CD4-positive, alpha-beta T cell (primary cell): ENCODE measurements at regions of chr3 and their contacts with region 1.

Region 1: GRCh38 chr3:143763564-143764162 is 84.6 kb downstream of the SLC9A9 start:
- DNase-seq: peak in 3 of 14 experiments; percentile 21 to 42 (median 27)
- ATAC-seq: no peak
- H3K4me3 ChIP-seq: no peak overlapping the region
- H3K4me3 Mint-ChIP-seq: peak overlapping the region; percentile 28
- H3K27ac ChIP-seq: no peak overlapping the region
- H3K27ac Mint-ChIP-seq: peak overlapping the region; percentile 14
- H3K4me1 ChIP-seq: peaks cover 3% of the 10 kb centered on the region
- H3K4me1 Mint-ChIP-seq: peaks cover 36% of the 10 kb centered on the region
- H3K27me3 ChIP-seq: no peaks in the 10 kb centered on the region
- H3K27me3 Mint-ChIP-seq: no peaks in the 10 kb centered on the region
- CTCF ChIP-seq: peak; percentile 44

Region 2: GRCh38 chr3:142828703-142829305 is 934.9 kb before region 1 on chr3:
- CTCF ChIA-PET with region 1: no interaction called
- POLR2A ChIA-PET with region 1: no interaction called
- intact Hi-C with region 1: loop called in 1 of 2 experiments (anchors 2 kb)
- DNase-seq: peak; percentile 14 to 67 (median 34)
- ATAC-seq: peak; percentile 82
- H3K4me3 ChIP-seq: no peak overlapping the region
- H3K4me3 Mint-ChIP-seq: no peak overlapping the region
- H3K27ac ChIP-seq: no peak overlapping the region
- H3K27ac Mint-ChIP-seq: no peak overlapping the region
- H3K4me1 ChIP-seq: no peaks in the 10 kb centered on the region
- H3K4me1 Mint-ChIP-seq: no peaks in the 10 kb centered on the region
- H3K27me3 ChIP-seq: no peaks in the 10 kb centered on the region
- H3K27me3 Mint-ChIP-seq: no peaks in the 10 kb centered on the region
- CTCF ChIP-seq: peak; percentile 49

Region 3: GRCh38 chr3:143998266-143998665 is 234.6 kb after region 1 on chr3:
- CTCF ChIA-PET with region 1: no interaction called
- POLR2A ChIA-PET with region 1: no interaction called
- intact Hi-C with region 1: no loop called
- DNase-seq: peak in 2 of 14 experiments; percentile 63 to 73
- ATAC-seq: no peak
- H3K4me3 ChIP-seq: no peak overlapping the region
- H3K4me3 Mint-ChIP-seq: no peak overlapping the region
- H3K27ac ChIP-seq: no peak overlapping the region
- H3K27ac Mint-ChIP-seq: no peak overlapping the region
- H3K4me1 ChIP-seq: no peaks in the 10 kb centered on the region
- H3K4me1 Mint-ChIP-seq: no peaks in the 10 kb centered on the region
- H3K27me3 ChIP-seq: no peaks in the 10 kb centered on the region
- H3K27me3 Mint-ChIP-seq: no peaks in the 10 kb centered on the region
- CTCF ChIP-seq: no peak